Posterior vena cava (tissue), 2 donors: ENCODE measurements at regions of chr5 and their contacts with region 1.

Region 1: GRCh38 chr5:172770675-172771438 is at the start of gene DUSP1:
- DNase-seq: peak; percentile 100
- total RNA-seq, gene DUSP1: 445 to 1,411 TPM

Region 2: DNA sequence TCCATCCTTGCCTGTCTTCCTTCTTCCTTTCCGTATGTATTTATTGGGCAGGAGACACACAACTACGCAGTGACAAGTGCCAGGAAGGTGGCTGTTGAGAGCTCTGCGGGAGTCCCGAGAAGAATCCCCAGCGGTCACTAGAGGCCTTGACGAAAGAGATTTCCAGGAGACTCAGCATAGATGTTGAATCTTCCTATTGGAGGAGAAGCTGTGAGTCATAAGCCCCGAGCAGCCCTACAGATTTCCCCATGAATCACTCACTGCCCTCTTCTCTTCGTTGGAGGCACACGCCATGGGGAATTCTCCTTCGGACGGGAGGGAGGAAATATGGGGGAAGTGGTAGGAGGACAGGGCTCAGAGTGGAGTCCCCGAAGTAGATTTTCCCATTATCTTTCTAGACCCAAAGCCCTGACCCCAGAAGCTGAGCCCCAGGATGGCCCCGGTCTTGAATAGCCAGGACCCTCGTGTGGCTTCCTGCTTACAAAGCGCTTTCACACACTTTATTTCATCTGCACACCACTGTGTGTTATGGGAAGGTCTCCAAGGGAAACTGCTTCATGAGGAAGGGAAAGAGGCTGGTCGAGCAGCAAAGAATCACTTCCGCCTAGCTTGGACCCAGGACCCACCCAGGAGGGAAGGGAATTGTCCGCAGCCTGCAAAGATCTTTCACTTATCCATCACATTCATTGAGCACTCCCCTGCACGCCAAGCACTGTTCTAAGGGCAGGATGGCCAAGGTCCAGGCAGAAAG is 12.6 kb before region 1 on chr5:
- intact Hi-C with region 1: no loop called
- DNase-seq: peak; percentile 81

Region 3: DNA sequence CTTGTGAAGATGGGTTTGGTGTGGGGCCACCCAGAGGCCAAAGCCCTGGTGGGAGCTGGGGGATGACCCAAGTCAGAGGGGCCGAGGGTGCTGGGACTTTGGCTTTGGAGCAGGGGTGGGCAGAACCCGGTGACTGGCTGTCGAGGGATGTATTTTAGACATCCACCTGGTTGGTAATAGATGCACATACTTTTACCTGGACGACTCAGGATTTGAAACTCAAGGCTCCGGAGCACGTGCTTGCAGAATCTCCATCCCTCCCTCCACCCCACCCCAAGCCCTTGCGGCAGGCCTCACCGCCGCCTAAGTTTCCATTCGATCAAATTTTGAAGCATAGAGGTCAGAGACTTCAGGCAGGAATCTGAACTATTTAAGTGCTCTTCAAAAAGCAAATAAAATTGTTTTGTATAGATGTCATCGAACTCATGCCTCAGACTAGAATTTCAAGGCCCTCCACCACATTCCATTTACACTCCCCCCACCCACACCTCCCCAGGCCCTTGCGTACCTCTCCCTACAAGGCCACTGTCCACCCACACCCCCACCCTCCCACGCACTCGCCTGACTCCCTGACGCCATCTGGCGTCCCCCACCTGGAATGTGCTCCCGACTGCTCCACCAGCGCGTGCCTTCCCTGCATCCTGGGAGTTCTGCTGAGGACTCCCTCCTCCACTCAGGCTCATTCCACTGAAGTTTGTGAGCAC is 131.8 kb after region 1 on chr5:
- intact Hi-C with region 1: loop called (anchors 10 kb)
- DNase-seq: peak; percentile 91